Prostate gland (tissue), 2 donors: ENCODE measurements at regions of chr1 and their contacts with region 1.

Region 1: GRCh38 chr1:202716654-202717053 is 6.4 kb upstream of the SYT2 start:
- DNase-seq: no peak
- H3K4me3 ChIP-seq: no peak overlapping the region
- H3K27ac ChIP-seq: no peak overlapping the region
- H3K4me1 ChIP-seq: no peaks in the 10 kb centered on the region
- H3K27me3 ChIP-seq: no peaks in the 10 kb centered on the region
- CTCF ChIP-seq: no peak
- POLR2A ChIP-seq: no peak

Region 2: GRCh38 chr1:202184750-202185460 is 531.7 kb before region 1 on chr1:
- intact Hi-C with region 1: loop called (anchors 5 kb)
- DNase-seq: peak; percentile 69
- H3K4me3 ChIP-seq: no peak overlapping the region
- H3K27ac ChIP-seq: no peak overlapping the region
- H3K4me1 ChIP-seq: no peaks in the 10 kb centered on the region
- H3K27me3 ChIP-seq: peaks cover 5% of the 10 kb centered on the region
- CTCF ChIP-seq: peak; percentile 57 to 80 (median 70)
- POLR2A ChIP-seq: no peak

Region 3: DNA sequence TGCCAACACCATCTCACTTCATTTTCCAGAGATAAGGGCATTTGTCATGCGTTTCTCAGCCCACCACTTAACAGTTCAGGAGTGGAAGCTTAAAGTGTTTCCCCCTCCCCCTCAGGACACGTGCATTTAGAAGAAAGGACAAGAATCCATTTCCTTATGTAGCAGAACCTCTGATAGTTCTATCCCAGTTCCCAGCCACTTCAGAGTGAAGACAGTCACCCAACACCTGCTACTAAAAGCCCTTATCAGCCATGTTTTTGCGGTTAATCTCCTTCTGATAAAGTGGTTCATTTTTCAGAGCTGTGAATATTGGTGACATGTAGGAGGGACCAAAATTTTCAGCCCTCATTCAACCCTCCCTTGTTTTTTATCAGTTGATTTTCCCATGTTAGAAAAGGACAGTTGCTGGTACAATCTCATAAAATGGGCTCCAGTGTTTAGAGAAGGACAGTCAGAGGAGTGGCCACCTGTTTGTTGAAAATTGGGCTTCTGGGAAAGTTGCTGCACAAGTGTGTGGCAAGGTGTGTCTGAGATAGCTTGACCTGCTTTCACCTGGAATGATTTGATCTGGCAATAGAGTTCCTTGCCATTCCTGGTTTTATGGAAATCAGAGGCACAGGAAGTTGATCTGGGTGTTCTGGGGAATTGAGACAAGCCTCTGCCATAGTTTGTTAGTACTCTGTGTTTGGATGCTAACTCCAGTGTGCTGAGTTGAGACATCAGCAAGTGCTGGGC is 254.1 kb before region 1 on chr1:
- intact Hi-C with region 1: loop called (anchors 5 kb)
- DNase-seq: peak; percentile 28
- H3K4me3 ChIP-seq: no peak overlapping the region
- H3K27ac ChIP-seq: peak overlapping the region; percentile 39 to 55
- H3K4me1 ChIP-seq: peaks cover 3% of the 10 kb centered on the region
- H3K27me3 ChIP-seq: no peaks in the 10 kb centered on the region
- CTCF ChIP-seq: no peak
- POLR2A ChIP-seq: no peak